ENCODE measurements at regions of chr9 and their contacts with region 1.

Region 1: GRCh38 chr9:20884985-20885593 is 146.4 kb downstream of the HACD4 start:
- DNase-seq: peak; percentile 34 to 76
- ATAC-seq: peak in 2 of 3 donors; percentile 60 to 64
- H3K4me3 ChIP-seq: no peak overlapping the region
- H3K4me3 Mint-ChIP-seq: no peak overlapping the region
- H3K27ac ChIP-seq: no peak overlapping the region
- H3K27ac Mint-ChIP-seq: no peak overlapping the region
- H3K4me1 ChIP-seq: no peaks in the 10 kb centered on the region
- H3K4me1 Mint-ChIP-seq: no peaks in the 10 kb centered on the region
- H3K27me3 ChIP-seq: no peaks in the 10 kb centered on the region
- H3K27me3 Mint-ChIP-seq: no peaks in the 10 kb centered on the region
- CTCF ChIP-seq: peak; percentile 79

Region 2: GRCh38 chr9:19925817-19926503 is 959.1 kb before region 1 on chr9:
- intact Hi-C with region 1: loop called (anchors 10 kb)
- DNase-seq: peak; percentile 54 to 90
- ATAC-seq: peak; percentile 93 to 100 (median 99)
- H3K4me3 ChIP-seq: no peak overlapping the region
- H3K4me3 Mint-ChIP-seq: peak overlapping the region; percentile 60
- H3K27ac ChIP-seq: no peak overlapping the region
- H3K27ac Mint-ChIP-seq: no peak overlapping the region
- H3K4me1 ChIP-seq: peaks cover 6% of the 10 kb centered on the region
- H3K4me1 Mint-ChIP-seq: peaks cover 8% of the 10 kb centered on the region in 2 donors
- H3K27me3 ChIP-seq: no peaks in the 10 kb centered on the region
- H3K27me3 Mint-ChIP-seq: peaks cover 8 to 51% of the 10 kb centered on the region in 2 donors
- CTCF ChIP-seq: peak; percentile 96

Region 3: GRCh38 chr9:21096172-21096900 is 211.2 kb after region 1 on chr9:
- intact Hi-C with region 1: loop called (anchors 5 kb)
- DNase-seq: peak; percentile 23 to 85
- ATAC-seq: peak; percentile 96 to 98 (median 96)
- H3K4me3 ChIP-seq: peak overlapping the region; percentile 16
- H3K4me3 Mint-ChIP-seq: peak overlapping the region; percentile 86
- H3K27ac ChIP-seq: peak overlapping the region; percentile 86
- H3K27ac Mint-ChIP-seq: peak overlapping the region; percentile 96 to 97
- H3K4me1 ChIP-seq: peaks cover 13% of the 10 kb centered on the region
- H3K4me1 Mint-ChIP-seq: peaks cover 35 to 37% of the 10 kb centered on the region in 2 donors
- H3K27me3 ChIP-seq: no peaks in the 10 kb centered on the region
- H3K27me3 Mint-ChIP-seq: no peaks in the 10 kb centered on the region
- CTCF ChIP-seq: no peak

Region 4: GRCh38 chr9:21110708-21111576 is 225.9 kb after region 1 on chr9:
- intact Hi-C with region 1: loop called (anchors 1 kb)
- DNase-seq: peak in 1 of 2 donors; percentile 87
- ATAC-seq: peak; percentile 92 to 97 (median 96)
- H3K4me3 ChIP-seq: no peak overlapping the region
- H3K4me3 Mint-ChIP-seq: no peak overlapping the region
- H3K27ac ChIP-seq: no peak overlapping the region
- H3K27ac Mint-ChIP-seq: no peak overlapping the region
- H3K4me1 ChIP-seq: no peaks in the 10 kb centered on the region
- H3K4me1 Mint-ChIP-seq: no peaks in the 10 kb centered on the region
- H3K27me3 ChIP-seq: no peaks in the 10 kb centered on the region
- H3K27me3 Mint-ChIP-seq: peaks cover 0 to 3% of the 10 kb centered on the region in 2 donors
- CTCF ChIP-seq: peak; percentile 98

Measured in natural killer cell (primary cell).